Activated CD4-positive, alpha-beta memory T cell treated with anti-CD3 and anti-CD28 coated beads for 36 hours (primary cell): ENCODE measurements at regions of chr6 and their contacts with region 1.

Region 1: DNA sequence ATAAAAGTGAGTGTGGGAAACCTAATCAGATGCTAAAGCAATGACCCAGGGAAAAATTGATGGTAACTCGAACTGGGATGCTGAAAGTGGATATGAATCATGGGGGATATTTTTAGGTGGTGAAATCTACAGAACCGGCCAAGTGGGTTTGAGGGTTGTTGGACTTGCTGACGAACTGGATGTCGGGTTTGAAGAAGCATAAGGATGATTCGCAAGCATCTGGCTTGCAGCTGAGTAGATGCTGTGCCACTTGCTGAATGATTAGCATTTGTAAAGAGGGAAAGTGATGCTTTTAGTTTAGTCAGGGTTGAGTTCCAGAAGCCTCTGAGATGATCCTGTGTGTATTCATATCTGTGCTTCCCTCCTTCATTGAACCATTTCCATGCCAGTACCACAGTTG is 54.9 kb downstream of the UBR2 start:
- DNase-seq: peak; percentile 19
- H3K4me3 Mint-ChIP-seq: no peak overlapping the region
- H3K27ac Mint-ChIP-seq: no peak overlapping the region
- H3K4me1 Mint-ChIP-seq: peaks cover 16% of the 10 kb centered on the region
- H3K27me3 Mint-ChIP-seq: no peaks in the 10 kb centered on the region

Region 2: GRCh38 chr6:42637681-42638080 is 19.0 kb after region 1 on chr6:
- CTCF ChIA-PET with region 1: interaction called, 3 read pairs
- POLR2A ChIA-PET with region 1: interaction called, 5 read pairs
- intact Hi-C with region 1: loop called (anchors 2 kb)
- DNase-seq: no peak
- H3K4me3 Mint-ChIP-seq: peak overlapping the region; percentile 0
- H3K27ac Mint-ChIP-seq: peak overlapping the region; percentile 69
- H3K4me1 Mint-ChIP-seq: peaks cover 22% of the 10 kb centered on the region
- H3K27me3 Mint-ChIP-seq: no peaks in the 10 kb centered on the region

Region 3: DNA sequence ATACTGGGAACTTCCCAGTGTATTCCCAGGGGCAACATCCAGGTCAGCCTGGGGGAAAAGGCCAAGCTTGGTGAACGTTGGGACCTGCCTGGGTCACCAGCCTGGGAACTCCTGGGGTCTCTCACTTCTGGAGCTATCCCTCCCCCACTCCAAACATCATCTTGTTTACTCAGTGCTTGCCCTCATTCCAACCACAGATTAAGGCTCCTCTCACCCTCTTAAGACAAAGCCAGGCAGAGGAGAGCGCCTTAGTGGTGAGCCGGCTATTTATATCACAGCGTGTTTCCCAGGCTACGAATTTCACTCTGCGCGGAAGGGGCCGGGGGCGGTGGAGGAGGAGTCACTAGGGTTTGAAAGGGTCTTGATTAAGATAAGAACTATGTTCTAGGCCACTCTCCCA is 91.6 kb after region 1 on chr6:
- CTCF ChIA-PET with region 1: no interaction called
- POLR2A ChIA-PET with region 1: no interaction called
- intact Hi-C with region 1: no loop called
- DNase-seq: no peak
- H3K4me3 Mint-ChIP-seq: no peak overlapping the region
- H3K27ac Mint-ChIP-seq: no peak overlapping the region
- H3K4me1 Mint-ChIP-seq: no peaks in the 10 kb centered on the region
- H3K27me3 Mint-ChIP-seq: no peaks in the 10 kb centered on the region